Mammary epithelial cell (primary cell): ENCODE measurements at regions of chr2 and their contacts with region 1.

Region 1: DNA sequence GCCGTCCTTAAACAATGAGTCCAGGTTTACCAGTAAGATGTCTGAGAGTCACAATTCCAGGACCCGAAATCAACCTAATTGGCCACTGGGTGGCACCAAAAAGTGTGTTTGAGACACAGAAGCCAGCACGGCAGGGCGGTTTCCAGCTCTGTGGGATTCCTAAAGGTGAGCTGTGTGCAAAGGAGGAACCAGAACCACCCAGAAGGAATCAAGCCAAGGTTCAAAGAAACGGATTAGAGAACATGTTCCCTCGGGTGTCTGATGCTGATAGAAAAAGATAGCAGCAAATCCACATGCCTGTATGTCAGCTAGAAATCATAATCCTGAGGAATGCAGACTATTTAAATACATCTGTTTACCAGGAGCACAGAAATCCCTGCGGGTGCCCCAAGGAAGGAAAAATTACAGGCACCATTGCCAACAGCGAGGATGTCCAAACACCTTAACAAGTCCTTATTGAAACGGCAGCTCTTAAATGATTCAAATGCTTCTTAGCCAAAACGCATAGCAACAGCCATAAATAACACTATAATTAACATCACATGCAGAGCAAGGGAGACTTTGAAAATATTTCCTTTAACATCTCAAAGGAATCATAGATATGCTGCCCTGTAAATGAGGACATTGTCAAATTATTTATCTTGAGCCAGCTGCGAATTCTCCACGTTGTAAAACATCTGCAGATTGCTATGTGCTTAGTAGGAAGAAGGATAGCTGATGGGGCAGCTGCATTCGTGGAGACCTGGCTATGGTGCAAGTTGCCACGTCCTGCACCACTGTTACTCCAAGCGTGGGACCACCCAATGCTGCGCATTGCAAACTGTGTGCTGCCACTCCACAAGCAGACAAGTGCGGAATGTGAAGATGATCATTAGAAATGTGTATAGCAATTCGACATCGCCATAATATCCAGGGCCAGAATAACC is 318.7 kb upstream of the NCKAP5 start:
- DNase-seq: peak; percentile 71
- H3K4me3 ChIP-seq: no peak overlapping the region
- H3K27ac ChIP-seq: no peak overlapping the region
- H3K4me1 ChIP-seq: peaks cover 16% of the 10 kb centered on the region
- H3K27me3 ChIP-seq: no peaks in the 10 kb centered on the region
- CTCF ChIP-seq: peak; percentile 61 to 73

Region 2: DNA sequence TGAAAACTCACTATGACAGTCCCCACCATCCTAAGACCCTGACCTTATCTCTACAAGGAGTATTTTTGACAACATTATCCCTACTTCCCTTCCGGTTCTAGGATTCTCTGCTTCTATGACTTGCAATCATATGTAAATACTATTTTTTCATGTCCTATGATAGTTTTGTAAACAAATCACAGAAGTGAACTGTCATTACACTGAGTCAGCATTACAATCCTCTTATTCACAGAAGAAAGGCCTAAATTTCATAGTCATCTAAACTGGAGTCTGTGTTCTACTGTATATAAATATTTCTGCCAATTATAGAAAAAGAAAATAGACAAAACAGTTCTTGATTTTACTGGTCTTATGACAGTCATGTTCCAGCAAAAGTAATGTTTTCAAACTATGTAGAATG is 583.9 kb before region 1 on chr2:
- CTCF ChIA-PET with region 1: no interaction called
- dilution Hi-C with region 1: no loop called
- in situ Hi-C with region 1: no loop called
- intact Hi-C with region 1: no loop called
- DNase-seq: peak; percentile 14
- H3K4me3 ChIP-seq: no peak overlapping the region
- H3K27ac ChIP-seq: no peak overlapping the region
- H3K4me1 ChIP-seq: no peaks in the 10 kb centered on the region
- H3K27me3 ChIP-seq: no peaks in the 10 kb centered on the region
- CTCF ChIP-seq: no peak

Region 3: DNA sequence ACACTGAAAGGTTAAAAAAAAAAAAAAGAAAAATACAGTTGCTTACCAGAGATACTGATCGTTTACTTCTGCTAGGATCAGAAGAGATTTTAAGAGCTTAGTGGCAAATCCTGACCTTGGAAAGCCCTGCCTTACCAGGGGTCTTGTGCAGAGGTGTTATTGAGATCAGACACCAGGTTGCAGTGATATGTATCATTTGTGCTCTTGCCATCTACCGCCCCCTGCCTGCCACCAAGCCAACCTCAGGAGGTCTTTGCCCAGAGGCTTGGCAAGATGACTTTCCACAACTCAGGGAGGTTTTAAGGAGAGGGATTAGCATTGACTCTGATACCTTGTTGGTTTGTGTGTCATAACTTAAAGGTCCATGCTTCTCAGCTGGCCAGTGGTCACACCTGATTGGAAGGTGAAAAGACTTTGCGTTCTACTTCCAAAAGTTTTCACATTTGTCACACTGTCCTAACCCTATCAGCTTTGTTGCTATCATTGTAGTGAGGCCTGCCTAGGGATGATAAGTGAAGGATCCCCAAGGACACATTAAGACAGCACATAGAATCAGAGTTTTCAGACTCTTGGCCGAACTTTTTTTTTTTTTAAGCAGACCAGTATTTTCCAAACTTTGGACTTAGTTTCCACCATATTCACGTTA is 320.7 kb after region 1 on chr2:
- CTCF ChIA-PET with region 1: no interaction called
- dilution Hi-C with region 1: no loop called
- in situ Hi-C with region 1: loop called in 1 of 2 experiments (anchors 25 kb)
- intact Hi-C with region 1: loop called (anchors 5 kb)
- DNase-seq: peak; percentile 43
- H3K4me3 ChIP-seq: no peak overlapping the region
- H3K27ac ChIP-seq: no peak overlapping the region
- H3K4me1 ChIP-seq: peaks cover 10% of the 10 kb centered on the region
- H3K27me3 ChIP-seq: no peaks in the 10 kb centered on the region
- CTCF ChIP-seq: peak; percentile 89 to 90

Region 4: GRCh38 chr2:134245340-134245984 is 358.5 kb after region 1 on chr2:
- CTCF ChIA-PET with region 1: no interaction called
- dilution Hi-C with region 1: no loop called
- in situ Hi-C with region 1: loop called in 1 of 2 experiments (anchors 25 kb)
- intact Hi-C with region 1: loop called (anchors 2 kb)
- DNase-seq: peak; percentile 57
- H3K4me3 ChIP-seq: no peak overlapping the region
- H3K27ac ChIP-seq: no peak overlapping the region
- H3K4me1 ChIP-seq: peaks cover 5% of the 10 kb centered on the region
- H3K27me3 ChIP-seq: no peaks in the 10 kb centered on the region
- CTCF ChIP-seq: peak; percentile 78 to 89

Region 5: GRCh38 chr2:134451347-134451630 is 564.3 kb after region 1 on chr2:
- CTCF ChIA-PET with region 1: no interaction called
- dilution Hi-C with region 1: no loop called
- in situ Hi-C with region 1: no loop called
- intact Hi-C with region 1: loop called (anchors 1 kb)
- DNase-seq: no peak
- H3K4me3 ChIP-seq: no peak overlapping the region
- H3K27ac ChIP-seq: no peak overlapping the region
- H3K4me1 ChIP-seq: peaks cover 4% of the 10 kb centered on the region
- H3K27me3 ChIP-seq: no peaks in the 10 kb centered on the region
- CTCF ChIP-seq: no peak